Dorsolateral prefrontal cortex (tissue), 120 donors: ENCODE measurements at regions of chr9 and their contacts with region 1.

Region 1: DNA sequence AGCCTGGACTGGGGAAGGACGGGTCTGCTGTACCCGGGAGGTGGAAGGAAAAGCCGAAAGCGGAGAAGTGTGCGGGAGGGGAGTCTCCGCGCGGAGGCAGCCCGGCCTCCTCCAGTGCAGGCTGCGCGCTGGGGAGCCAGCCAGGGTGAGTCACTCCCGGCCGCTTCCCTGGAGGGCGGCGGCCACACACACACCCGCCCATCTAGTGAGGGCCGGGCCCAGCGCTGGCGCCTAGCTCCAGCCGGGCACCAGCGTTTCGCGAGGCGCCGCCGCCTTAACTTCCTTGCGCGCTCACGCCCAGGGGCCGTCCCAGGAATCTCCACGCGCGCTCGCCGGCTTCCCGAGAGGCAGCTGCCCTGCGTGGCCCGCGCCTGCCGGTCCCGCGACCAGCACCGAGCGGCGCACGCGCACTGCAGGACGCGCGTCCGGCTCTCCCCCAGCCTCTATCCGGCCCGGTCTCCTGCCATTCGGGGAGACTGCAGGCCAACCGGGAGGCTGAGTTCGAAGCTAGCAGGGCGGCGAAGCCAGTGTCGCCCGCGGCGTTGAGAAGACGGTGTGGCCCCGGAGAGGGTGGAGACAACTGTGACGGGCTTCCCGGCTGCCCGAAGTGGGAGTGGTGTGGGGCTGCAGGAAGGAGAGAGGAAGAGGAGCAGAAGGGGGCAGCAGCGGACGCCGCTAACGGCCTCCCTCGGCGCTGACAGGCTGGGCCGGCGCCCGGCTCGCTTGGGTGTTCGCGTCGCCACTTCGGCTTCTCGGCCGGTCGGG is at the start of gene JAK2:
- DNase-seq: peak; percentile 72 to 92 (median 86)
- H3K4me3 ChIP-seq: peak within 1 kb of the TSS; percentile 44 to 99 (median 90)
- H3K27ac ChIP-seq: peak within 1 kb of the TSS; percentile 84 to 99 (median 97)
- H3K27me3 ChIP-seq: no peaks in the 10 kb centered on the region
- CTCF ChIP-seq: peak in 53 of 56 donors; percentile 12 to 68 (median 46)
- total RNA-seq, gene JAK2: 15.3 to 35.5 (median 24.7) TPM

Region 2: DNA sequence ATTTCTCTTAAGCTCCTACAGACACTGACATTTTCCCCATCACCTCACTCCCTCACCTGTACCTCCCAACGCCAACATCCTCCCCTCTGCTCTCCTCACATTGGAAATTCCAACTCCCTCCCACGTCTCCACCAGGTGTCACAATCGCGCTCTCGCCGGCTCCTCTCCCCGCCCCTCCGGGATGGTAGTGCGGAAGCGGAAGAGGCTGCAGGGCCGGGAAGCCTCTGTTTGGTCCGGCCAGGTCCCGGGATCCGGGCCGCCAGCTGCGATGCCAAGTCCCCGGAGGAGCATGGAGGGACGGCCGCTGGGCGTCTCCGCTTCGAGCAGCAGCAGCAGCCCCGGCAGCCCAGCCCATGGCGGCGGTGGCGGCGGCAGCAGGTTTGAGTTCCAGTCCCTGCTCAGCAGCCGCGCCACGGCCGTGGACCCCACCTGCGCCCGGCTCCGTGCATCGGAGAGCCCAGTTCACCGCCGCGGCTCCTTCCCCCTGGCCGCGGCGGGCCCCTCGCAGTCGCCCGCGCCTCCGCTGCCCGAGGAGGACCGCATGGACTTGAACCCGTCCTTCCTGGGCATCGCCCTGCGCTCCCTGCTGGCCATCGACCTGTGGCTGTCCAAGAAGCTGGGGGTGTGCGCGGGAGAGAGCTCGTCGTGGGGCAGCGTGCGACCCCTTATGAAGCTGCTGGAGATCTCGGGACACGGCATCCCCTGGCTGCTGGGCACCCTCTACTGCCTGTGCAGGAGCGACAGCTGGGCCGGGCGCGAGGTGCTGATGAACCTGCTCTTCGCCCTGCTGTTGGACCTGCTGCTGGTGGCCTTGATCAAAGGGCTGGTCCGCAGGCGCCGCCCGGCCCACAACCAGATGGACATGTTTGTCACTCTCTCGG is 322.5 kb before region 1 on chr9 and contains the start of gene PLPP6:
- intact Hi-C with region 1: loop called in 1 of 2 experiments (anchors 5 kb)
- DNase-seq: peak; percentile 63 to 94 (median 82)
- H3K4me3 ChIP-seq: peak within 1 kb of the TSS; percentile 62 to 96 (median 83)
- H3K27ac ChIP-seq: peak within 1 kb of the TSS in 56 of 59 donors; percentile 2 to 90 (median 78)
- H3K27me3 ChIP-seq: no peaks in the 10 kb centered on the region
- CTCF ChIP-seq: peak; percentile 30 to 79 (median 64)
- total RNA-seq, gene PLPP6: 3.1 to 11.2 (median 6.9) TPM

Region 3: GRCh38 chr9:4740638-4741364 is 244.0 kb before region 1 on chr9 and contains the start of gene AK3:
- intact Hi-C with region 1: loop called in 1 of 2 experiments (anchors 5 kb)
- DNase-seq: peak; percentile 58 to 92 (median 81)
- H3K4me3 ChIP-seq: peak within 1 kb of the TSS; percentile 64 to 99 (median 91)
- H3K27ac ChIP-seq: peak within 1 kb of the TSS; percentile 9 to 96 (median 90)
- H3K27me3 ChIP-seq: no peaks in the 10 kb centered on the region
- CTCF ChIP-seq: peak in 50 of 56 donors; percentile 13 to 70 (median 46)
- total RNA-seq, gene AK3: 30.5 to 87.1 (median 48.8) TPM

Region 4: DNA sequence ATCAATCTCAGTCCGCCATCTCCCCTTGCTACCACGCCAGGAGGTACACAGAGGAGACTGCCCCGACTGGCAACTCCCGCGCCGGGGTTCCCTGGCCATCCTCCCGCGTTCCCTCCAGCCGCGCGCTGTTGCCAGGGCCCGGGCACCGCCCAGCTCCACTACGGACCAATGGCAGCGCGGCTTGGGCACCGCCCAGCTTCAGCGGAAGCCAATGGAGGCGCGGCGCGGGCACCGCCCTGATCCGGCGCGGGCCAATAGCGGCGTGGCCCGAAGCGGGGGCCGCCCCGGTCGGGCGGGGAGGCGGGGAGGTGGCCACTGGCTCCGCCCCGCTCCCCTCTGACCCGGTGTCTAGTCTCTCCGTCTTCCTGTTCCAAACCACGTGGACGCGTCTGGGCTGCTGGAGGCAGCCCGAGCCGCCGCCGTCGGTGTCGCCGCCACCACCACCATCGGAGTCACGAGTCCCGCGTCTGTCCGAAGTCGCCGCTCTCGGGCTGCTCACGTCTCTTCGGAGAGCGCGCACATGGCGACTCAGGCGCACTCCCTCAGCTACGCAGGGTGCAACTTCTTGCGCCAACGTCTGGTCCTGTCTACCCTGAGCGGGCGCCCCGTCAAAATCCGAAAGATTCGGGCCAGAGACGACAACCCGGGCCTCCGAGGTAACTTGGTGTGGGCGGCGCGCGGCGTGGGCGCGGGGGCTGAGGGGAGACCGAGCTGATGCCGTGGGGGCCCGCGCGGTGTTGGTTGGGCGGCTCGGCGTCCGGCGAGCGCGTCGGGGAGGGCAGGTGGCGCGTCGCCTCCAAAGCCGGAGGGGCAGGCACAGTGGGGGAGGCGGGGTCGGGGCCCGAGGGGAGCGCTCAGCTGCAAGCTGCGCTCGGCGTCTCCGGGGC is 192.0 kb before region 1 on chr9 and contains the start of gene RCL1:
- intact Hi-C with region 1: loop called (anchors 2 kb)
- DNase-seq: peak; percentile 94 to 100 (median 97)
- H3K4me3 ChIP-seq: peak within 1 kb of the TSS; percentile 67 to 99 (median 92)
- H3K27ac ChIP-seq: peak within 1 kb of the TSS; percentile 16 to 93 (median 82)
- H3K27me3 ChIP-seq: no peaks in the 10 kb centered on the region
- CTCF ChIP-seq: peak in 16 of 56 donors; percentile 8 to 49 (median 17)
- total RNA-seq, gene RCL1: 17.9 to 36.6 (median 25.8) TPM

Region 5: GRCh38 chr9:4936823-4937222 is 48.0 kb before region 1 on chr9:
- intact Hi-C with region 1: no loop called
- DNase-seq: no peak
- H3K4me3 ChIP-seq: no peak overlapping the region
- H3K27ac ChIP-seq: peak overlapping the region in 5 of 59 donors; percentile 13 to 54 (median 32)
- H3K27me3 ChIP-seq: no peaks in the 10 kb centered on the region
- CTCF ChIP-seq: no peak

Region 6: GRCh38 chr9:5052838-5053237 is 68.0 kb after region 1 on chr9:
- intact Hi-C with region 1: loop called in 1 of 2 experiments (anchors 2 kb)
- DNase-seq: no peak
- H3K4me3 ChIP-seq: no peak overlapping the region
- H3K27ac ChIP-seq: peak overlapping the region in 1 of 59 donors; percentile 19
- H3K27me3 ChIP-seq: no peaks in the 10 kb centered on the region
- CTCF ChIP-seq: no peak

Region 7: DNA sequence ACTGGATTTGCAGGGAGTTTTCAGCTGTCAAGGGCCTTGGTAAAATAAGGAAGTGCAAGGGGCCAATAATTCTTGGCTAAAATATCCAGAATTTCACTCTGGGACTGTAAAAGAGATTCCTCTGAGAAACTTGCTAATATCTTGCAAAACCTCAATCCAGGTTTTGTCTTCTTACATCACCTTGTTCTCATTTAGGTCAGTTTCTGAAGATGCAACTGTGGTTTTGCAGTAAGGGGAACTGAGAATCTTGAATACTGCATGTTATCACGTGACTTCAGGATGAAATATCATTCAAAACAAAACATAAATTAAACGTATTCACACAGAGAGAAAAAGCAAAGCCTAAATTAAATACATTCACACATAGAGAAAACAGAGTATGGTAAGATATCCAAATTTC is 609.1 kb after region 1 on chr9:
- intact Hi-C with region 1: loop called in 1 of 2 experiments (anchors 10 kb)
- DNase-seq: no peak
- H3K4me3 ChIP-seq: no peak overlapping the region
- H3K27ac ChIP-seq: no peak overlapping the region
- H3K27me3 ChIP-seq: no peaks in the 10 kb centered on the region
- CTCF ChIP-seq: no peak